ENCODE measurements at regions of chr10 and their contacts with region 1.

Region 1: GRCh38 chr10:63157845-63158624 is 24.9 kb downstream of the NRBF2 start:
- DNase-seq: peak; percentile 99
- ATAC-seq: peak; percentile 80
- H3K4me3 ChIP-seq: no peak overlapping the region
- H3K27ac ChIP-seq: peak overlapping the region; percentile 17
- H3K4me1 ChIP-seq: peaks cover 7% of the 10 kb centered on the region; the same call in 1 of the 2 replicates
- H3K27me3 ChIP-seq: no peaks in the 10 kb centered on the region
- CTCF ChIP-seq: peak; percentile 100

Region 2: DNA sequence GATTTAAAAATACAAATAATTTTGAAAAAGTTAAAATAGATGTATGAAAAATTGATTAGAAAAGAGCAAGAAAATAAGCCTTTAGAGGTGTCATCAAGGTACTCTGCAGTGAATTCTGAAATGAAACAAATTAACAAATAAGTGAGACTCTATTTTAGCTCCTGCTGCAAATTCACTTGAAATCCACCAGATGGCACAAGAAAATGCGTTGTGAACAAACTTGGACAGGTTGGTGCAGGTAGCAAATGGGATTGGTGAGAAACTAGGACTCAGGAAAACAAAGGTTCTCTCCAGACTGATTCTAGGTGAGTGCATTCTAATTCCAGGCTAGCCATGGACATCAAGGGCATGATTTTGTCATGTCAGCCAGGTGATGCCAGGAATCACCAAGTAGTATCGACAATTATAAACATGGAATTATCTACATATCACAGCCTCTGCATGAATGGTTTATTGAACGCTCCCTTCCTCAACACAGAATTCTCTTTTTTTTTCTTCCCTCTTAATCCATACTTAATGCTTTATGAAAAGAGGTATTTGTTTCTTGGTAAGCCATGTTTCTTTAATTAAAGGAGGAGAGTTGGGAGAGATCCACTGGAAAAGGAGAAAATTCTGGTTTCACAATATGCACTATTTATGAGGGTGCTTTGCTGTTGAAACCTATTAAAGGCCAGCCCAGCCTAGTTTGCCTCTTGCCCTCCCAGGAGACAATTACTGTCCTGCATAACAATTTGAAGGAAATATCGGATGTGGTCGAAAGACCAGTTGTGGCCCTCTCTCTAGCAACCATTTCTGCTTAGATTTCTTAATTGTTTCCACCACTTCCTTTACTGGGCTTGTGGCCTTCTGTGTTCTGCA is 665.8 kb before region 1 on chr10:
- CTCF ChIA-PET with region 1: interaction called, 10 read pairs
- POLR2A ChIA-PET with region 1: no interaction called
- intact Hi-C with region 1: loop called (anchors 1 kb)
- DNase-seq: peak; percentile 92
- ATAC-seq: peak; percentile 90
- H3K4me3 ChIP-seq: no peak overlapping the region
- H3K27ac ChIP-seq: no peak overlapping the region
- H3K4me1 ChIP-seq: no peaks in the 10 kb centered on the region
- H3K27me3 ChIP-seq: peaks cover 7% of the 10 kb centered on the region; the same call in 1 of the 2 replicates
- CTCF ChIP-seq: peak; percentile 100

Region 3: GRCh38 chr10:62594093-62594520 is 563.9 kb before region 1 on chr10:
- CTCF ChIA-PET with region 1: interaction called, 4 read pairs
- POLR2A ChIA-PET with region 1: no interaction called
- intact Hi-C with region 1: loop called (anchors 1 kb)
- DNase-seq: peak; percentile 98
- ATAC-seq: peak; percentile 86
- H3K4me3 ChIP-seq: no peak overlapping the region
- H3K27ac ChIP-seq: no peak overlapping the region
- H3K4me1 ChIP-seq: peaks cover 11% of the 10 kb centered on the region
- H3K27me3 ChIP-seq: no peaks in the 10 kb centered on the region
- CTCF ChIP-seq: peak; percentile 100

Region 4: GRCh38 chr10:63003816-63004453 is 154.1 kb before region 1 on chr10:
- CTCF ChIA-PET with region 1: interaction called, 4 read pairs
- POLR2A ChIA-PET with region 1: no interaction called
- intact Hi-C with region 1: loop called (anchors 1 kb)
- DNase-seq: peak; percentile 87
- ATAC-seq: peak; percentile 39
- H3K4me3 ChIP-seq: no peak overlapping the region
- H3K27ac ChIP-seq: no peak overlapping the region
- H3K4me1 ChIP-seq: peaks cover 16% of the 10 kb centered on the region
- H3K27me3 ChIP-seq: no peaks in the 10 kb centered on the region
- CTCF ChIP-seq: peak; percentile 99

Region 5: DNA sequence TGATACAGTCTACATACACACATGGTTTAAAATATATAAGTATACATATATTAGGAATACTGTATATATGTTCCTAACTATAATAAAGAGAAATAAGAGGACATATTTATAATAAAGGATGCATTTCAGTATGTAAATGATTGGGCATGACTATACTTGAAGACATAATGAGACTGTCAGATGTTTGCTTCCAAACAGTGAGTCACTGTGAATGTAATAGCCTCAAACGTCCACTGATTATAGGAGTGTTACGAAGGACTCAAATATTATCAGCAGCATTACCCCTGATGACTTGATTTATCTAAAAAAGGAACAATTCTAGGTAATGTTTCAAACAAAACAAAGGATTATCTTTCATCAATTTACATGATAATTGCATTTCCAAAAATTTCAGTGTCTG is 64.8 kb before region 1 on chr10:
- CTCF ChIA-PET with region 1: no interaction called
- POLR2A ChIA-PET with region 1: no interaction called
- intact Hi-C with region 1: loop called (anchors 1 kb)
- DNase-seq: peak; percentile 81
- ATAC-seq: peak; percentile 99
- H3K4me3 ChIP-seq: no peak overlapping the region
- H3K27ac ChIP-seq: no peak overlapping the region
- H3K4me1 ChIP-seq: peaks cover 5% of the 10 kb centered on the region
- H3K27me3 ChIP-seq: no peaks in the 10 kb centered on the region
- CTCF ChIP-seq: no peak; the same call in 1 of the 2 replicates

Region 6: GRCh38 chr10:63431962-63432797 is 274.1 kb after region 1 on chr10:
- CTCF ChIA-PET with region 1: no interaction called
- POLR2A ChIA-PET with region 1: interaction called, 10 read pairs
- intact Hi-C with region 1: no loop called
- DNase-seq: peak; percentile 98
- ATAC-seq: peak; percentile 55
- H3K4me3 ChIP-seq: no peak overlapping the region
- H3K27ac ChIP-seq: peak overlapping the region; percentile 71
- H3K4me1 ChIP-seq: peaks cover 65% of the 10 kb centered on the region
- H3K27me3 ChIP-seq: no peaks in the 10 kb centered on the region
- CTCF ChIP-seq: no peak

Measured in PC-3 (cell line).